Activated CD4-positive, alpha-beta memory T cell treated with anti-CD3 and anti-CD28 coated beads, Interleukin-2, amount 10 ng/mL, durations not matched to agents 7 days and 5 days (primary cell): ENCODE measurements at regions of chr14 and their contacts with region 1.

Region 1: GRCh38 chr14:73503648-73504047 is 12.9 kb downstream of the RIOX1 start:
- DNase-seq: no peak
- H3K4me3 Mint-ChIP-seq: no peak overlapping the region
- H3K27ac Mint-ChIP-seq: no peak overlapping the region
- H3K4me1 Mint-ChIP-seq: peaks cover 4% of the 10 kb centered on the region
- H3K27me3 Mint-ChIP-seq: no peaks in the 10 kb centered on the region

Region 2: DNA sequence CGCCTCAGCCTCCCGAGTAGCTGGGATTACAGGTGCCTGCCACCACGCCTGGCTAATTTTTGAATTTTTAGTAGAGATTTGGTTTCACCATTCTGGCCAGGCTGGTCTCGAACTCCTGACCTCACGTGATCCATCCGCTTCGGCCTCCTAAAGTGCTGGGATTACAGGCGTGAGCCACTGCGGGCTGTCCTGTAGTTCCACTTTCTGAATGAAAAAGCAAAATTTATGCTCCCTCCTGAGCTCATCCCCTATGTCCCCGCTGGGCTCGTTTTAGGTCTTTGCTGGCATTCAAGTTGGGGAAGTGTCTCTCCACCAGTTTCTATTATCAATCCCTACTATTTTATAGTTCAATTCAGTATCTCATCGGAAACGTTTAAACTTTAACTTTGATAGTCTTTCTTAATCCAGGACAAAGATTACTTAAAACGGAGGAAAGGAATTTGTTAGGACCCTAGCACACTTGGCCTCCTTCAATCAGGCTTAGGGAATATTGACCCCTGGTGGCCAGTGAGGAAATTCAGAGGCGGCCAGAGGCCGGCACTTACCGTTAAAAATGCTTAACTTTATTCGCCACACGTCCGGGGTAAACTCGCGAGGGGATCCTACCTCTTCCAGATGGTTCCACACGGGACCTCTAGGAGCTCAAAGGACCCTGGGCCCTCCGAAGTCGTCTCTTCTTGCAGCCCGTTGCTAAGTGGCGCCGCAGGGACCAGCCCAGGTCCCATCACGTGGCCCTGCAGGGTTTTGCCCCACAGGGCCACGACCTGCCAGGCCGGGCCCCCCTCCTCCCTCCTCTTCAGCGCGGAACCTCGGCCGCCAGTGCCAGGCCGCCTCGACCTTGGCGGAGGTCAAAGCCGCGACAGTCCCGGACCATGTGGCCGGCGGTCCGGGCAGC is 129.7 kb after region 1 on chr14:
- CTCF ChIA-PET with region 1: interaction called, 14 read pairs
- POLR2A ChIA-PET with region 1: no interaction called
- DNase-seq: peak; percentile 59
- H3K4me3 Mint-ChIP-seq: peak overlapping the region; percentile 48
- H3K27ac Mint-ChIP-seq: no peak overlapping the region
- H3K4me1 Mint-ChIP-seq: peaks cover 5% of the 10 kb centered on the region
- H3K27me3 Mint-ChIP-seq: peaks cover 17% of the 10 kb centered on the region